Left ventricle myocardium inferior (tissue), 1 donor: ENCODE measurements at regions of chr2 and their contacts with region 1.

Region 1: GRCh38 chr2:231674587-231675338 is 33.6 kb upstream of the PTMA start:
- DNase-seq: peak; percentile 71
- H3K4me3 ChIP-seq: no peak overlapping the region
- H3K27ac ChIP-seq: peak overlapping the region; percentile 93
- H3K4me1 ChIP-seq: peaks cover 58% of the 10 kb centered on the region
- H3K27me3 ChIP-seq: no peaks in the 10 kb centered on the region
- CTCF ChIP-seq: peak; percentile 91

Region 2: DNA sequence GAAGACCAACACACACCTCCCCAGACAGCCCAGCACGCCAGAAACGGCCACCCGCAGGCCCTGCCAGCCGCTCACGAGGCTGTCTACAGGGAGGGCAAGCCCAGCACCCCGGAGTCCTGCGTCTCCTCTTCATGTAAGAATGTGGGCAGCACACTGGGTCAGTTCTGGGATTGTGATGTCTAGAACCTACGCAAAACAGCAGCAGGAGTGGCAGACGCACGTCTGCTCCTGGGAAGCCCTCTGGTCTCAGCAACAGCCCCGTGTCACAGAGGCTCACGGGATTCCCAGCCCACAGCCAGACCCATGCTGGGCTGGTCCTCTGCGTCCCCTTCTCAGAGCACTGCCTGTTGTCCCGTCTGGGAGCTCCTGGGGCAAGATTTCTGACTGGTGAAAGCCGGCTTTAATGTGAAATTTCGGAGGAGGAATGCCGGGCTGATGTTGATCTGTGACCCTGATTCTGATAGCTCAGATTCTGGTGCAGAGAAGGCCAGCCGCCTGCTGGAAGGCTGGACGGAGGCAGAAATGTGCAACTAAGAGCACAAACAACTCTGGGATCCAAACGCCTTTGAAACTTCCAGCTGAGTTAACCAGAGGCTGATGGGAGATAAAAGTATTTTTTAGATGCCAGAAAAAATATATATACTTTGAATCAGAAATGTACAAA is 318.8 kb before region 1 on chr2:
- intact Hi-C with region 1: no loop called
- DNase-seq: peak; percentile 16
- H3K4me3 ChIP-seq: peak overlapping the region; percentile 4
- H3K27ac ChIP-seq: peak overlapping the region; percentile 69
- H3K4me1 ChIP-seq: peaks cover 18% of the 10 kb centered on the region
- H3K27me3 ChIP-seq: no peaks in the 10 kb centered on the region
- CTCF ChIP-seq: peak; percentile 24

Region 3: GRCh38 chr2:231612179-231613053 is 62.3 kb before region 1 on chr2:
- intact Hi-C with region 1: loop called (anchors 5 kb)
- DNase-seq: peak; percentile 92
- H3K4me3 ChIP-seq: no peak overlapping the region
- H3K27ac ChIP-seq: peak overlapping the region; percentile 100
- H3K4me1 ChIP-seq: peaks cover 58% of the 10 kb centered on the region
- H3K27me3 ChIP-seq: no peaks in the 10 kb centered on the region
- CTCF ChIP-seq: peak; percentile 98

Region 4: DNA sequence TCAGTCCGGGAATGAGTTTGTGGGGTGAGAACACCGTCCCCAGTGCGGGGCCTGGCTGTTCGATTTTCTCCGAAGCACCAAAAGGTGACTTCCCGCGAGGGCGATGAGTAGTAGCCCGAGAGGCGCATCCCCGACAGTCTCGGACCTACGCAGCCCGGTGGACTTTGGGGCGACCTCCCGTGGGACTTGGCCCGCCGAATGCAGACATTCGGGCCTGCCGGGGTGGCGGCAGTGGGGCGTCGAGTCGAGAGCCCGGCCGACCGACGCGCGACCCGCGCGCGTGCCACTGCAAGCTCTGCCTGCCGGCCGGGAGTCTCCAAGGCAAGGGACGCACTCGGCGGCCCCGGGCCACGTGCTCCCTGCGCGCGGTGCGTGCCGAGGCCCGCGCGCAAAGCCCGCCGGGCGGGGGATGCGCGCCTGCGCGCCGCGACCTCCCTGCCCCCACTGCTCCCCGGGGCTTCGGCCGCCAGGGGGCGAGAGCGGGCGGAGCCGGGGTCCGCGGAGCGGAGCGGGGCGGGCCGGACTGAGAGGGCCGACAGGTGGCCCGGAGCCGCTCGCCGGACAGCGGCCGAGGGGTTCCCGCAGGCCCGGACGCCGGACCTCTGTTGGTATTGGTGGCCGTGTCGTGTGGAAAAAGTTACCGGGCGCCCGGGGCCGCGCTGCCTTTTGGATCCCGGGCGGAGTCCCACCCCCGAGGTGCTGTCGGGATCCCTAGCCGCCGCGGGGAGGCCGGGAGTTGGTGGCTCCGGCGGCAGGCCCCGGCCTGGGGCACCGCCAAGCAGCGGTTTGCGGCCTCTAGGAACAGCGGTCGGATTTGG is 35.4 kb after region 1 on chr2:
- intact Hi-C with region 1: loop called (anchors 2 kb)
- DNase-seq: peak; percentile 82
- H3K4me3 ChIP-seq: peak overlapping the region; percentile 100
- H3K27ac ChIP-seq: peak overlapping the region; percentile 99
- H3K4me1 ChIP-seq: peaks cover 83% of the 10 kb centered on the region
- H3K27me3 ChIP-seq: no peaks in the 10 kb centered on the region
- CTCF ChIP-seq: peak; percentile 93